ENCODE measurements at regions of chr1 and their contacts with region 1.

Region 1: GRCh38 chr1:109773146-109773899 is 9.6 kb upstream of the EPS8L3 start:
- DNase-seq: peak; percentile 71
- H3K4me3 ChIP-seq: no peak overlapping the region
- H3K27ac ChIP-seq: no peak overlapping the region
- H3K4me1 ChIP-seq: no peaks in the 10 kb centered on the region
- H3K27me3 ChIP-seq: no peaks in the 10 kb centered on the region
- CTCF ChIP-seq: peak; percentile 93 to 97

Region 2: DNA sequence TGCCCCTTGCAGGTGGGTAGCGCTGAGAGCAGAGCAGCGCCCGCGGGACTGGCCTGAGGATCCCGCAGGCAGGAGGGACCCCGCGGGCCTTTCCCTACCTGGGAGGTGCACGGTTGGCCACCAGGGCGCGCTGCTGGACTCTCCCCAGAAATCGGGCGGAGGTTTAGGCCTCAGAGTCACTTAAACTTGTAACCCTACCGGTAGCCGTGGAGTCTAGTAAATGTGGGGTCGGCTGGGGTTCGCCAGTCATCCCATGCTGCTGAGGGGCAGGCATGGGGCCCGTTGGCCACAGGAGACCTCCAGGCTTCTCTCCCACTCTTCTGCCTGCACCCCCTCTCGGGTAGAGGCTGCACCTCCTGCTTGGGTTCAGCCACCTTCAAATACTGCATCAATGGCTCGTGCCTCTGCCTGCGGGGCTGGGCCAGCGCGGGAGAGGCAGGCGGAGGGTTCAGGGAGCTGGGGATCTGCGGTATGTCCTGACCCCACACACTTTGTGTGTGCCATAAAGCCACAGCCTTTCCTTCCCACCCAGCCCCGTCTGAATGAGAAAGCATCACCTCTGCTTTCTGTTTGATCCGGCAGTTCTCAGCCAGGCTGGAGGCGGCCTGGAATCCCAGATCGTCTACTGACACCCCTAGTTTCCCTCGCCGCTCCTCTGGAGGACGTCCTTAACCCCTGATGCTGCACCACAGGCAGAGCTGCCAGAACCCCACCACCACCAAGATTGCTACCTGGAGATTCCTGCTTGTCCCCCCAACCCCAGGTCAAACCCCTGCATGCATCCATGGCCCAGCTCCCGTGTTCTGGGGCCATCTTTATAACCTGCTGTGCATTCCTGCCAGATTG is 129.7 kb before region 1 on chr1:
- CTCF ChIA-PET with region 1: interaction called, 9 read pairs
- dilution Hi-C with region 1: no loop called
- in situ Hi-C with region 1: loop called (anchors 5 kb)
- intact Hi-C with region 1: loop called (anchors 1 kb)
- DNase-seq: peak; percentile 51
- H3K4me3 ChIP-seq: no peak overlapping the region
- H3K27ac ChIP-seq: no peak overlapping the region
- H3K4me1 ChIP-seq: no peaks in the 10 kb centered on the region
- H3K27me3 ChIP-seq: no peaks in the 10 kb centered on the region
- CTCF ChIP-seq: peak; percentile 77 to 94

Region 3: GRCh38 chr1:109718491-109718890 is 54.8 kb before region 1 on chr1:
- CTCF ChIA-PET with region 1: no interaction called
- dilution Hi-C with region 1: no loop called
- in situ Hi-C with region 1: no loop called
- intact Hi-C with region 1: loop called (anchors 1 kb)
- DNase-seq: peak; percentile 21
- H3K4me3 ChIP-seq: no peak overlapping the region
- H3K27ac ChIP-seq: no peak overlapping the region
- H3K4me1 ChIP-seq: peaks cover 18% of the 10 kb centered on the region
- H3K27me3 ChIP-seq: no peaks in the 10 kb centered on the region
- CTCF ChIP-seq: peak in 1 of 2 donors; percentile 21

Region 4: DNA sequence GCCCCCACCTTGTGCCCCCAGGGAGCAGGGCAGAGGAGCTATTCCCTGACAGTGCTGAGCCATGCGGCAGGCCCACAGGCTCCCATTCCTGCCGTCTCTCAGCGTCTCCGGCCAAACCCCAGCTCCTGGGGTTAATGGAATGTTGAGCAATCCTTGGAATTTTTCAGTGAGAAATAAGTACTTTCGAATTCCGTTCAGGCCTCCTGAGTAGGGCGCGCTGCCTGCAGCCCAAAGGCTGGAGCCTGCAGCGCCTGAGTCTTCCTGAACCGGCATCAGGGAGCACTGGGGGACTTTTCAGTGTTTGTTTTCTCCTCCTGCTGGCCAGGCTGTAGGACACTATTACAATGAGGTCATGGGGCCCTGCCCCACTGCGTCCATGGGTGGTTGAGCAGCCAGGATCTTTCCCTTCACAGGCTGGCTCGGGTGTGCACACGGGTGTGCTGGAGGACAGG is 104.0 kb after region 1 on chr1:
- CTCF ChIA-PET with region 1: no interaction called
- dilution Hi-C with region 1: no loop called
- in situ Hi-C with region 1: no loop called
- intact Hi-C with region 1: loop called (anchors 1 kb)
- DNase-seq: peak; percentile 69
- H3K4me3 ChIP-seq: no peak overlapping the region
- H3K27ac ChIP-seq: peak overlapping the region; percentile 19
- H3K4me1 ChIP-seq: peaks cover 40% of the 10 kb centered on the region
- H3K27me3 ChIP-seq: no peaks in the 10 kb centered on the region
- CTCF ChIP-seq: no peak

Region 5: GRCh38 chr1:109910123-109910962 is 137.0 kb after region 1 on chr1 and contains the start of gene CSF1:
- CTCF ChIA-PET with region 1: no interaction called
- dilution Hi-C with region 1: no loop called
- in situ Hi-C with region 1: loop called in 1 of 2 experiments (anchors 25 kb)
- intact Hi-C with region 1: no loop called
- DNase-seq: peak; percentile 64
- H3K4me3 ChIP-seq: peak within 1 kb of the TSS; percentile 58 to 81 (median 67)
- H3K27ac ChIP-seq: peak within 1 kb of the TSS; percentile 29
- H3K4me1 ChIP-seq: peaks cover 21% of the 10 kb centered on the region
- H3K27me3 ChIP-seq: no peaks in the 10 kb centered on the region
- CTCF ChIP-seq: no peak
- total RNA-seq, gene CSF1: 5.6 to 29.5 TPM

Region 6: DNA sequence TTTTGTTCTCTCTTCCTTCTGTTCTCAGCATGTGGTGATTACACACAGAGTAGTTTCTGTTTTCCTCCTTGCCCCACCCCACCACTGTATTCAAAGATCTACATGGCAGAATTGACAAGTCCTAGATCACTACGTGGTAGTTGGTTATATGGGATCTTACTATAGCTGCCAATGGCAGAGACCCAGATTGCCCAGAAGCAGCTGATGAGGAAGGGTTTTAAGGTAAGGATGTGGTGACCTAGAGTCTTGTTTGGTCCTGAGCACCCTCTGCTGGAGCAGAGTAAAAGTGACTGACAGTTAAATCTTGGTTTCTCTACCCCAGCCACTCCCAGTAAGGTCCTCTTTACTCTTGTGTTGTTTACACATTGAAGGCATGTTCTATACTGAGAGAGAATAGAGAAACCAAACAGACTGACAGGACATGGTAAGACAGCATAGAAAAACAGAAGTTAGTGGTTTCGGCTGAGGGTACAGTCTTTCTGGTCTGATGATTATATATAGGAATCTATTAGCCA is 238.3 kb after region 1 on chr1:
- CTCF ChIA-PET with region 1: interaction called, 3 read pairs
- dilution Hi-C with region 1: no loop called
- in situ Hi-C with region 1: no loop called
- intact Hi-C with region 1: loop called (anchors 1 kb)
- DNase-seq: peak; percentile 54
- H3K4me3 ChIP-seq: no peak overlapping the region
- H3K27ac ChIP-seq: no peak overlapping the region
- H3K4me1 ChIP-seq: no peaks in the 10 kb centered on the region
- H3K27me3 ChIP-seq: no peaks in the 10 kb centered on the region
- CTCF ChIP-seq: peak; percentile 58 to 71

Region 7: GRCh38 chr1:110106013-110106941 is 333.0 kb after region 1 on chr1:
- CTCF ChIA-PET with region 1: no interaction called
- dilution Hi-C with region 1: no loop called
- in situ Hi-C with region 1: no loop called
- intact Hi-C with region 1: loop called (anchors 1 kb)
- DNase-seq: peak; percentile 36
- H3K4me3 ChIP-seq: no peak overlapping the region
- H3K27ac ChIP-seq: no peak overlapping the region
- H3K4me1 ChIP-seq: no peaks in the 10 kb centered on the region
- H3K27me3 ChIP-seq: no peaks in the 10 kb centered on the region
- CTCF ChIP-seq: peak; percentile 90 to 97

Measured in mammary epithelial cell (primary cell).